Left ventricle myocardium superior (tissue), 1 donor: ENCODE measurements at regions of chr17 and their contacts with region 1.

Region 1: DNA sequence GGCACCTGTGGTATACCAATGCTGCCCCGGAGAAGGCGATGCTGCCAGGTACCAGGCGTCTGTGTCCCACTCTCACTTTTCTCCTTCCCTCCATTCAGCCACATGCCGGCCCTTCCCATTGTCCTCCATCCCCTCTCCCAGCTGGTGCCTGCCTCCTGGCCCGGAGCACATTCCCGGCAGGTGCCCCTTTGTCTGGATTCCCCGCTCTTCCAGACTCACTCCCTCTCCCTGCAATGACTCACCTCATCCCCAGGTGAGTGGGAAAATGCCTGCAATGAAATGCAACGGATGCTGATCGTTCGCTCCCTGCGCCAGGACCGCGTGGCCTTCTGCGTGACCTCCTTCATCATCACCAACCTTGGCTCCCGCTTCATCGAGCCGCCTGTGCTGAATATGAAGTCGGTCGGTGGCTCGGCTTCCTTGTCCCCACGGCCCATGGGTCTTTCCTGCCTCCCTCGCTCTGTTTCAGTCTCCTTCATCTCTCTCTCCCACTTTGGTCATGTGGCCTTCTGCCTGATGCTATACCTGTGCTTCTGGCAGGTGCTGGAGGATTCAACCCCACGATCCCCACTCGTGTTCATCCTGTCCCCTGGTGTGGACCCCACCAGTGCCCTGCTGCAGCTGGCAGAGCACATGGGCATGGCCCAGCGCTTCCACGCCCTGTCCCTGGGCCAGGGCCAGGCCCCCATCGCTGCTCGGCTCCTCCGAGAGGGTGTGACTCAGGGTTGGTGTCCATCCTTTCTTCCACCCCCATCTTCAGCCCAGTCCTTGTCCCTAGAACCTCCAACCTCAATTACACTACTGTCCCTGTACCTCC is 10.2 kb upstream of the KDM6B start:
- DNase-seq: no peak
- ATAC-seq: no peak

Region 2: DNA sequence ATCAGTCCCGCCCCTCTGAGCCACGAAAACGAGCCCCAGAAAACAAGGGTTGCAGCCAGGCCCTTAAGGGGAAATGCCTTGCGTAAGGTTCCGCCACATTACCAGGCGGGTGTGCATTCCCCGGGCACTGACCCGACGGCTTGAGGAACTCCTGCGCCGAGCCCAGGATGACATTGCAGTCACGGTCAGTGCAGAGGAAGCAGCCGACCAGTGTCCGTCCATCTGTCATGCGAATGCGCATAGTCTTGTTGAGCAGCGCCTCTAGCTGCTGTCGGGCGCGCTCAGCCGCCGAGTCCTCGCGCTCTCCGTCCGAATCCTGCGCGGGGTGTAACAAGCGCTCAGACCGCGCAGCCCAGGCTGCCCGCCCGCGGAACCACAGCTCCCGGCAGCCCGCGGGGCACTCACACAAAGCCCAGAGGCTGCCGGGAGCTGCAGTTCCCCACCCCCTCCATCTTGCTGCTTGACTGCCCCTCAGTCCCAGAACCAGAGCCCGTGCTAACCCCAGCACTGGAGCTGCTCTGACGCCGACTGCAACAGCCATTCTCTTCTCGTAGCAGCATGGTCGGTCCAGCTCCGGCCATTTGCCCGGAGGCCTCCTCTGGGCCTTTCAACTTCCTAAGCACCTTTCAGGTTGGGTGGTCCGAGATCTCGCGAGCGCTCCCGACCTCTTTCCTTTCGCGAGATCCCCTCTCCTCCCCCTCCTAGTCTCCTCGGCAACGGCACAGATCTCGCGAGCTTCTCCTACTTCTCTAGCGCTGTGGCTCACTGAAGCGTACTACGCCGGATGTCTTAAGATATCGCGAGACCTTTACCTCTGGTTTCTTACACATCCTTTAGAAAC is 33.3 kb after region 1 on chr17 and contains the start of gene NAA38:
- intact Hi-C with region 1: loop called (anchors 5 kb)
- DNase-seq: peak; percentile 97
- ATAC-seq: peak; percentile 87
- total RNA-seq, gene NAA38: 93.2 TPM